ENCODE measurements at regions of chr5 and their contacts with region 1.

Region 1: DNA sequence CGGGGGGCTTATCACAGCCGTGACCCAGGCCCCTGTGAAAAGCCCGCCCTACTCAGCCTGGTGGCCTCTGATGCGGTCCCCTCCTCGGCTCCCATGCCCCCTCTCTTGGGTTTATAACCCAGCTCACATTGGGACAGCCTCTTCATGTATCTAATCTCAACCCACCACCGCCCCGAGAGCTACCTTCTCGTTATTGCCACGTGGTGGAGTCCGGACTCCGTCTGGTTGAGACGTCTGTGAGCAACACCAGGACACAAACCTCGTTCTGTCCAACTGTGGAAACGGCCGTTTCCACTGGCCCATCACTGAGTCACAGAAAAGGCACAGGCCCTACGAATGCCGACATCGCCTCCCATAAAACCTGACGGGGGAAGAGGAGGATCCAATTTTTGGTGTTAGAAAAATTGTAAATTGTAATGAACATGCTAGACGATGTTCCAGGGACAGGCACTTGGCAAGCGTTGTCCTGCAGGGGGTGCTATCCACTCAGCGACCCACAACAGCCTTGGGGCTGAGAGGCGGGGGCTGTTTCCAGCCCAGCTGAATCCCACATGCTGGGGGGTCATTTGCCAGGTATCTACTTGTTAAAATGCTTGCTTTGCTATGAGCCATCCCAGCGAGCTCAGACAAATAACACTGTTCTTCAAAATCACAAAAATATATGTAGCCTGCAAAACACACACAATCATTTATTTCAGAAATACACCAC is 37.3 kb upstream of the N4BP3 start:
- DNase-seq: peak in 5 of 6 donors; percentile 45 to 85 (median 61)
- ATAC-seq: peak; percentile 90 to 98 (median 94)
- H3K4me3 ChIP-seq: no peak overlapping the region
- H3K27ac ChIP-seq: no peak overlapping the region
- H3K4me1 ChIP-seq: no peaks in the 10 kb centered on the region
- H3K27me3 ChIP-seq: peaks cover 0 to 8% (median 3%) of the 10 kb centered on the region in 4 donors
- CTCF ChIP-seq: peak; percentile 53 to 79 (median 77)

Region 2: DNA sequence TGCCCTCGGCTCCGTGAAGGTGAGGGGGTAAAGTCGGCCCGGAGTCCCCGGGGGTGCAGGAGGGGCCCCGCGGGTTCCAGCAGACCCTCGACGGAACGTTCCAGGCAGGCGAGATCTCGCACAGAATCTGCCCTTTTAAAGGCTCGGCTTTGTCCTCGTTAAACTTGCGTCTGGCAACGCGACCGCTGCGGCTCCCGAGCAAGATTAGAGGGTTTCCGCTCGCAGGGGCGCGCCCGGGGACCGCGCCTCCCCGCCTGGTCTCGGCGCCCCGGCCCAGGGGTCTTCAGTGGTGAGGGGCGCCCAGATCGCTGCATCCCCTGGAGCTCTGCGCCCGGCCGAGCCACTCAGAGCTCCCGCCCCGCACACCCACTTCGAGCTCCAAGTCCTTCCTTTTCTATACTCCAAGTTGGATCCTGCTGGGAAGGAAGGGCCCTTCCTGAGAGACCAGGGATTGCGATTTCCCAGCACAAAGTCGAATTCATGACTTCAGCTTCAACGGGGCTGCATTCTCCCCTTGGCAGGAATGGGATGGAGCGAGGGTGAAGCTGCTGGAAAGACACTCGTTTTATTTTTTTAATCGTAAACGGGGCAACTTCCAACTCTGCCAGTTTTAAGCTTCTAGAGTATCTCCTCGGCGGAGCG is 91.3 kb before region 1 on chr5:
- intact Hi-C with region 1: no loop called
- DNase-seq: no peak
- ATAC-seq: peak in 2 of 4 donors; percentile 21 to 27
- H3K4me3 ChIP-seq: no peak overlapping the region
- H3K27ac ChIP-seq: no peak overlapping the region
- H3K4me1 ChIP-seq: no peaks in the 10 kb centered on the region
- H3K27me3 ChIP-seq: no peaks in the 10 kb centered on the region
- CTCF ChIP-seq: no peak

Region 3: DNA sequence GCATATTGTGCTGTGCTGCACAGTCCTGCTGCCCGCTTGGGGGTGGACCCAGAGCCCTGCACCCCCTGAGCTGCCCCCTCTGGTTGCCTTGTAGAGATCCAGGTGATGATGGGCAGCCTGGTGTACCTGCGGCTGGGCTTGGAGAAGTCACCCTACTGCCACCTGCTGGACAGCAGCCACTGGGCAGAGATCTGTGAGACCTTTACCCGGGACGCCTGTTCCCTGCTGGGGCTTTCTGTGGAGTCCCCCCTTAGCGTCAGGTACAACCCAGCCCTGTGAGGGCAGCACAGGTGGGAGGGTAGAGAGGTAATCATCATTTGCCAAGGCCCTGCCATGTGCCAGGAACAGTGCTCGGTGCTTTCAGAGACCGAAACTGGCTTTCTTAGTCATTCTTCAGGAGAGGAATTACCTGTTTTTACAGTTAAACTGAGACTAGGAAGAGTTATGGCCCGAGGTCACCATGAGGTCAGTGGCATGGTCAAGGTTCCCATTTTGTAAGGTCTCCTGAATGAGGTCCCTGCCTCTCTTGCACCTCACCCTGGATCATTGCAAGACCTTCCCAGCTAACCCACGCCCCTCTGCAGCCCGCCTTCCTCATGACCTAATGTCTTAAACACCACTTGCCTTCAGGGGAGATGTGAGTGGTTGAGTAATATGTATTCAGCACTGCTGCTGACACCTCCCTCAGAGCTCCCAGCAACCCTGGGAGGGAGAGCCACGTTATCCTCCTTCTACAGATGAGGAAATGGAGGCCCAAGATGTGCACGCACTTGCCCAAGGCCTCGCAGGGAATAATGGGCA is 70.2 kb after region 1 on chr5:
- intact Hi-C with region 1: loop called in 2 of 3 experiments (anchors 5 to 10 kb)
- DNase-seq: peak; percentile 60 to 89 (median 80)
- ATAC-seq: peak; percentile 72 to 92 (median 88)
- H3K4me3 ChIP-seq: no peak overlapping the region
- H3K27ac ChIP-seq: no peak overlapping the region
- H3K4me1 ChIP-seq: no peaks in the 10 kb centered on the region
- H3K27me3 ChIP-seq: no peaks in the 10 kb centered on the region
- CTCF ChIP-seq: peak; percentile 64 to 72 (median 68)

Region 4: DNA sequence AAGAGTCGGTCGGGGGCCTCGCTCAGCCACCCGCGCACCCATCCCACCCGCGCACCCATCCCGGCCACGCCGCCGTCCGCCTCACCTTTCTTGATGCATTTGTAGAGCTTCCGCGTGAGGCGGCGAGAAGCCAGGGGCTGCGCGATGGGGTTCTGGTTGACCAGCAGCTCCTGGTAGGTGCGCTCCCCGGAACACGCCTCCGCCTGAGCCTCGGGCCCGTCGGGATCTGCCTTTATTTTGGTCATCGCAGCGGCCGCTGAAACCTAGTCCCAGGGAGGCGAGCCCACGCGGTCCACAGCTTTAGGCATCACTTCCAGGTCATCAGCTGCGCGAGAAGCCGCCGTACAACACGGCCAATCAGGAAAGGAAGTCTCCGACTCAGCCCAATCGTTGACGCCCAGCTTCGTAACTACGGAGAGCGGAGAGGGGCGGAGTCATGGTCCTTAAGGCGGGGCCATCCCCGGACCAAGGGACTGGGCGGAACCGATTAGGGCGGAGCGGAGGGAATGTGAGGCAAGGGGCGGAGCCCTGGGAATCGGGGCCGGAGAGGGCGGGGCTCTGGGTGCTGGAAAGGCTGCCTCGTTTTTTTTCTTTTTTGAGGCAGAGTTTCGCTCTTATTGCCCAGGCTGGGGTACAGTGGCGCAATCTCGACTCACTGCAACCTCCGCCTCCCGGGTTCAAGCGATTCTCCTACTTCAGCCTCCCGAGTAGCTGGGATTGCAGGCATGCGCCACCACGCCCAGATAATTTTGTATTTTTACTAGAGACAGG is 77.8 kb after region 1 on chr5 and contains the start of gene NHP2:
- intact Hi-C with region 1: loop called in 2 of 3 experiments (anchors 5 to 10 kb)
- DNase-seq: peak; percentile 97 to 100 (median 98)
- ATAC-seq: peak; percentile 99
- H3K4me3 ChIP-seq: peak within 1 kb of the TSS; percentile 68 to 79 (median 74)
- H3K27ac ChIP-seq: peak within 1 kb of the TSS in 1 of 4 donors; percentile 21
- H3K4me1 ChIP-seq: peaks cover 0 to 12% (median 4%) of the 10 kb centered on the region in 3 donors
- H3K27me3 ChIP-seq: no peaks in the 10 kb centered on the region
- CTCF ChIP-seq: no peak
- total RNA-seq, gene NHP2: 34.6 to 65.6 (median 53.9) TPM

Region 5: GRCh38 chr5:178163772-178164735 is 88.1 kb after region 1 on chr5:
- intact Hi-C with region 1: loop called in 2 of 3 experiments (anchors 5 to 10 kb)
- DNase-seq: peak; percentile 75 to 99 (median 92)
- ATAC-seq: peak; percentile 97 to 100 (median 100)
- H3K4me3 ChIP-seq: peak overlapping the region in 1 of 4 donors; percentile 17
- H3K27ac ChIP-seq: no peak overlapping the region
- H3K4me1 ChIP-seq: peaks cover 0 to 3% (median 0%) of the 10 kb centered on the region in 3 donors
- H3K27me3 ChIP-seq: no peaks in the 10 kb centered on the region
- CTCF ChIP-seq: peak; percentile 99 to 100 (median 99)

Region 6: GRCh38 chr5:178340187-178340586 is 264.2 kb after region 1 on chr5:
- intact Hi-C with region 1: no loop called
- DNase-seq: peak in 1 of 6 donors; percentile 16
- ATAC-seq: peak in 2 of 4 donors; percentile 20 to 36
- H3K4me3 ChIP-seq: no peak overlapping the region
- H3K27ac ChIP-seq: no peak overlapping the region
- H3K4me1 ChIP-seq: no peaks in the 10 kb centered on the region
- H3K27me3 ChIP-seq: no peaks in the 10 kb centered on the region
- CTCF ChIP-seq: no peak

Region 7: GRCh38 chr5:178356431-178356872 is 280.5 kb after region 1 on chr5:
- intact Hi-C with region 1: no loop called
- DNase-seq: peak in 1 of 6 donors; percentile 58
- ATAC-seq: peak in 2 of 4 donors; percentile 22 to 37
- H3K4me3 ChIP-seq: no peak overlapping the region
- H3K27ac ChIP-seq: no peak overlapping the region
- H3K4me1 ChIP-seq: peaks cover 0 to 4% (median 0%) of the 10 kb centered on the region in 3 donors
- H3K27me3 ChIP-seq: no peaks in the 10 kb centered on the region
- CTCF ChIP-seq: no peak

Measured in pancreas (tissue), 10 donors.